ENCODE measurements at regions of chr15 and their contacts with region 1.

Region 1: GRCh38 chr15:40044717-40045571 is 6.0 kb upstream of the SRP14 start:
- DNase-seq: peak; percentile 59 to 83
- H3K4me3 ChIP-seq: peak overlapping the region; percentile 51
- H3K27ac ChIP-seq: no peak overlapping the region
- H3K4me1 ChIP-seq: peaks cover 50% of the 10 kb centered on the region
- H3K27me3 ChIP-seq: no peaks in the 10 kb centered on the region
- CTCF ChIP-seq: peak; percentile 84

Region 2: DNA sequence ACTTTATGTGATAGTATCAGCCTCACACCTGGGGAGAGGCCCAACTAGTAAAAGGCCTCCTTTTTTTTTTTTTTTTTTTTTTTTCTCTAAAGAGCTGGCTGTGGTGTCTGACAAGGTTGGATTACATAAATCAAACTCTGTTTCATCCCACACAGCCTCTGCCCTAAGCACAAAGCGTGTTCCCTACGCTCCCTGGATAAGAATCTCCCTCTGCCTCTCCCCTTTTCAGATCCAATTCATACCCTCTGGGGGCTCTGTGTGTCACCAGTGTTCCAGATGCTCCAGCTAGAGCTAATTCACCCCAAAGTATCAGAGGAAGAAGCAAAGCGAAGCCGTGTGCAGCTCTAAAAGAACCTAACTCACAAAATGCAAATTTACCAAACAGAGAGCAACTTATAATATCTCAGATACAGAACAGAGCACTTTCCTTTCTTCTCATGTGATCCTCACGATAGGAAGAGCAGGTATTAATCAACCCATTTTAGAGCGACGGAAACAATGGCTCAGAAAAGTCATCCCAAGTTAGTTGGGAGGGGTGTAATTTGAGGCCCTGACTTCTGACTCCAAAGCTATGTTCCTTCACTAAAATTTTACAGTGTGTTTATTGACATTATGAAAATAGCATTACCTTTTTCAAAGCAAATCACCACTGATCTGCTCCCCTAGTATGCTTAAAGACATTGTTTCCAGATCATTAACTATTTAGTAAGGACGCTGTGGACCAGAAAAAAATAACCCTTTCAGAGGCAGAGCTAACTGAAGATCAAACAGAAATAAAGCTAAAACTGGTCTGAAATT is 51.3 kb after region 1 on chr15:
- CTCF ChIA-PET with region 1: no interaction called
- POLR2A ChIA-PET with region 1: interaction called, 12 read pairs
- intact Hi-C with region 1: no loop called
- DNase-seq: no peak
- H3K4me3 ChIP-seq: no peak overlapping the region
- H3K27ac ChIP-seq: no peak overlapping the region
- H3K4me1 ChIP-seq: peaks cover 62% of the 10 kb centered on the region
- H3K27me3 ChIP-seq: no peaks in the 10 kb centered on the region
- CTCF ChIP-seq: no peak

Region 3: DNA sequence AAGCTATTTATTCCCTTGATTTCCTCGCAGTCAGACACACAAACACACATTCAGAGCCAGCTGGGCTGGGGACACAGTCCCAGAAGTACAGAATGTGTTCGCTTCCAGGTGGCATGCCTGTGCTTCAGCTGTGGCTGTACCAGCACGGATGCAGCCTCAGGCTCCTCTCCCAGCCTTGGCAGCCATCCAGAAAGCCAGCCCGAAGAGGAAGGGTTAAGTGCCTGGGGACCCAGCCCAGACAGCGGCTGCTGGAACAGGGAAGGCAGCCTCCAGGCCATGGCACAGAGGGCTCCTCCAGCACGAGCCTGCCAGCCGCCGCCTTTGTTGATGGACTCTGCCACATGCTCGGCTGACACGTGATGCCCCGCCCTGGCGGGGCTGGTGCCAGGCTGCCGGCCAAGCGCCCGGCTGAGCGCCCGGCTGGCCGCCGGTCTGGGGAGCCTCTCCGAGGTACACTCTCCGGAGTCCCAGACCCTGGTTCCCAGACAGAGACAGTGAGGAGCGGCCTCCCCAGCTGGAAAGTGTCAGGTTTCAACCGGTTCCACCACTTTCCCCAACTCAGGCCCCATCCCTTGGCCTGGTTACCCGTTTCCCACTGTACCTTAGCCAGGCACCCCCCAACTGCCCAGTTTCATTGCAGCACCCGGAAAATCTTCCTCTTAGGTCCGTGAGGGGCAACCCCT is 58.4 kb after region 1 on chr15:
- CTCF ChIA-PET with region 1: interaction called, 67 read pairs
- POLR2A ChIA-PET with region 1: interaction called, 5 read pairs
- intact Hi-C with region 1: loop called (anchors 1 kb)
- DNase-seq: peak; percentile 78 to 95
- H3K4me3 ChIP-seq: peak overlapping the region; percentile 42; the same call in 1 of the 2 replicates
- H3K27ac ChIP-seq: peak overlapping the region; percentile 55
- H3K4me1 ChIP-seq: peaks cover 98% of the 10 kb centered on the region
- H3K27me3 ChIP-seq: no peaks in the 10 kb centered on the region
- CTCF ChIP-seq: no peak

Region 4: DNA sequence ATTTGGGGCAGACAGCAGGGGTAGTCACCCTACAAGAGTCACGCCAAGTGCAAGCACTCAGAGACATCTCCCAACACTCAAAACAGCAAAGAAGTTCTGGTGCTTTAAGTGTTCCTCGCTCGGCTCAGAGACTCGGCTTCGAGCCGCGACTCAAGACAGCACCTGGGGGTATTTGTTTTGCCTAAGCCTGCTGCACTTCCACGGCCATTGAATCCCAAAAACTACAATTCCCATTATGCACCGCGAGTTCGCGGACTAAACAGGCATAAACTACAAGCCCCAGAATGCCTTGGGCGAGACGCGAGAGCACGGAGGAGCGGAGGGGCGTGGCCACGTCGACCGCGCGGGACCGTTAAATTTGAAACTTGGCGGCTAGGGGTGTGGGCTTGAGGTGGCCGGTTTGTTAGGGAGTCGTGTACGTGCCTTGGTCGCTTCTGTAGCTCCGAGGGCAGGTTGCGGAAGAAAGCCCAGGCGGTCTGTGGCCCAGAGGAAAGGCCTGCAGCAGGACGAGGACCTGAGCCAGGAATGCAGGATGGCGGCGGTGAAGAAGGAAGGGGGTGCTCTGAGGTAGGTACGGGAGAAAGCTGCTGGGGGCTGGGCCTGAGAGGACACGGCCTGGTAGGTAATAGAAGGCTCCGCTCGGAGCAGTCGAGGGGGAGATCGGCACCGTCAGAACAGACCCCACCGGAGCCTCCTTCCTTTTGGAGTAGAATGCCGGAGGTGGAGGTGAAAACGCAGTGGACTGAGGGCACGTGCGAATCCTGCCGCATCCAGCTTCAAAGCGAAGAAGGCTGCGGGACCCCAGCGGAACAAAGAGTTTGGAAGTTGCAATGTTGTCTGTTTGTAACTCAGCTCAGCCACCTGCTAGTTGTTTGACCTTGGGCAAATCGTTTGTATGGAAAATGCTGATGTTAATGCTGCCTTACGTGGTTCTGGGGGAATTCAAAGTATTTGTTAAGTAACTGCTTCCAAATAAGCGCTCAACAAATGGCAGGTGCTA is 116.0 kb after region 1 on chr15 and contains the start of gene BUB1B:
- CTCF ChIA-PET with region 1: interaction called, 5 read pairs
- POLR2A ChIA-PET with region 1: interaction called, 3 read pairs
- intact Hi-C with region 1: loop called (anchors 1 kb)
- DNase-seq: peak; percentile 91 to 92
- H3K4me3 ChIP-seq: peak within 1 kb of the TSS; percentile 67
- H3K27ac ChIP-seq: no peak within 1 kb of the TSS
- H3K4me1 ChIP-seq: peaks cover 29% of the 10 kb centered on the region
- H3K27me3 ChIP-seq: no peaks in the 10 kb centered on the region
- CTCF ChIP-seq: no peak
- total RNA-seq, gene BUB1B: 74.3 and 75.3 TPM in 2 replicates

Region 5: DNA sequence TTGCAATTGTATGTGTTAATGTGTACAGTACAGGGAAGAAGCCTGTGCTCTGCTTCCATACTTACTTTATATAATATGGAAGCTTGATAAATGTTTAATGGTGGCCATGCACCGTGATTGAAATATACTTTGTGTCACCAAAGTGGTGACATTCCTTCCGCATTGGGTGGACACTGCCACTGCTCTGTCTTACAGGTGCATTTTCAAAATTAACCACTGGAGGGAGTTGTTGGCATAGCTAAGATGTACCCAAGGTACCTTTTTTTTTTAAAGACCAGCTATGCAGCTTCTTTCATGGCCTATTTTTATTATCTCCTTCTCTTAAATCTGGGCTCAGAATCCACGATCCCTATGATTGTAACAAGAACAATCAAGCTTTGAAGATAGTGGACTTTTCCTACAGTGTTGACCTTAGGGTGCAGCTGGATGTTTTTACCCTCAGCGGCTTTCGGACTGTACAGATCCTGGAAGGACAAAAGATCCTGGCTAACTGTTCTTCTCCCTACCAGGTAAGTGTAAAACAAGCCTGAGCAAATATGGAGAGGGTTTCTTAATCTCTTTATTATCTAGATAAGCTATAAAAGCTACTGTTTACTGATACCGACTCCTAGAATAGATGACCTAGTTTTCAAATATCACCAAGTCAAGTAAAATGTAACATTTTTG is 172.3 kb after region 1 on chr15:
- CTCF ChIA-PET with region 1: interaction called, 3 read pairs
- POLR2A ChIA-PET with region 1: no interaction called
- intact Hi-C with region 1: loop called (anchors 1 kb)
- DNase-seq: peak; percentile 55 to 64
- H3K4me3 ChIP-seq: no peak overlapping the region
- H3K27ac ChIP-seq: no peak overlapping the region
- H3K4me1 ChIP-seq: no peaks in the 10 kb centered on the region
- H3K27me3 ChIP-seq: no peaks in the 10 kb centered on the region
- CTCF ChIP-seq: peak; percentile 85

Region 6: DNA sequence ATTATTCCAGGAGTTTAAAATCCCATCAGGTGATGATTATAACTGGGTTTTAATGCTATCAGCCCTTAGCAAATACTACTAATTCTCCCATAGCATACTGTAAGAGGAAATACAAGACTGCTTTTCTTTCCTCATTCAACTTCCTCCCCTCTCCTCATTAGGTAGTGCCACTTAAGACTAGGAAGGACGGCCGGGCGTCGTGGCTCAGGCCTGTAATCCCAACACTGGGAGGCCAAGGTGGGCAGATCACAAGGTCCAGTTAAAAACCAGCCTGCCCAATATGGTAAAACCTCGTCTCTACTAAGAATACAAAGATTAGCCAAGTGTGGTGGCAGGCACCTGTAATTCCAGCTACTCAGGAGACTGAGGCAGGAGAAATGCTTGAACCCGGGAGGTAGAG is 1342.7 kb after region 1 on chr15:
- CTCF ChIA-PET with region 1: no interaction called
- POLR2A ChIA-PET with region 1: no interaction called
- intact Hi-C with region 1: no loop called
- DNase-seq: no peak
- H3K4me3 ChIP-seq: no peak overlapping the region
- H3K27ac ChIP-seq: no peak overlapping the region
- H3K4me1 ChIP-seq: no peaks in the 10 kb centered on the region
- H3K27me3 ChIP-seq: no peaks in the 10 kb centered on the region
- CTCF ChIP-seq: no peak